ENCODE measurements at regions of chr16 and their contacts with region 1.

Region 1: GRCh38 chr16:67521095-67521804 is 7.4 kb upstream of the RIPOR1 start:
- DNase-seq: peak; percentile 95
- H3K4me3 Mint-ChIP-seq: peak overlapping the region; percentile 88
- H3K27ac Mint-ChIP-seq: peak overlapping the region; percentile 98
- H3K4me1 Mint-ChIP-seq: peaks cover 15% of the 10 kb centered on the region
- H3K27me3 Mint-ChIP-seq: peaks cover 8% of the 10 kb centered on the region

Region 2: DNA sequence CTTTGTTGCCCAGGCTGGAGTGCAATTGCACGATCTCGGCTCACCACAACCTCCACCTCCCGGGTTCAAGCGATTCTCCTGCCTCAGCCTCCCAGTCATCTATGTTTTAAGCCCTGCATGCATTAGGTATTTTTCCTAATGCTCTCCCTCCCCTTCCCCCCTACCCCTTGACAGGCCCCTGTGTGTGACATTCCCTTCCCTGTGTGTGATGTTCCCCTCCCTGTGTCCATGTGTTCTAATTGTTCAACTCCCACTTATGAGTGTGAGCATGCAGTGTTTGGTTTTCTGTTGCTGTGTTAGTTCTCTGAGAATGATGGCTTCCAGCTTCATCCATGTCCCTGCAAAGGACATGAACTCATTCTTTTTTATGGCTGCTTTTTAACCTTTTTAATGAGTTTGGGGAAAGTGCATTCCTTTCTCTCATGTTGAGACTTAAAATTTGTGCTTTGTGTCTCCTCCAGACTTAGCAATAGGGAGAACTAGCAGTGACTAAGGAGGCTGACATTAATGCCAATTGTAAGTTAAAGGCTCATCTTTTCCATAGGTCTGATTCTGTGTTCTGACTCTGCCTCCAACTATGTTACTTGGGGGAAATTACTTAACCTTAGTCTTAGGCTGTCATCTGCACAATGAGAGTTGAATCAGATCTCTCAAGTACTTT is 429.2 kb before region 1 on chr16:
- intact Hi-C with region 1: no loop called
- DNase-seq: no peak
- H3K4me3 Mint-ChIP-seq: no peak overlapping the region
- H3K27ac Mint-ChIP-seq: peak overlapping the region; percentile 92
- H3K4me1 Mint-ChIP-seq: peaks cover 17% of the 10 kb centered on the region
- H3K27me3 Mint-ChIP-seq: no peaks in the 10 kb centered on the region

Region 3: GRCh38 chr16:67499106-67499505 is 22.1 kb before region 1 on chr16:
- intact Hi-C with region 1: loop called (anchors 1 kb)
- DNase-seq: no peak
- H3K4me3 Mint-ChIP-seq: no peak overlapping the region
- H3K27ac Mint-ChIP-seq: no peak overlapping the region
- H3K4me1 Mint-ChIP-seq: peaks cover 19% of the 10 kb centered on the region
- H3K27me3 Mint-ChIP-seq: no peaks in the 10 kb centered on the region

Region 4: DNA sequence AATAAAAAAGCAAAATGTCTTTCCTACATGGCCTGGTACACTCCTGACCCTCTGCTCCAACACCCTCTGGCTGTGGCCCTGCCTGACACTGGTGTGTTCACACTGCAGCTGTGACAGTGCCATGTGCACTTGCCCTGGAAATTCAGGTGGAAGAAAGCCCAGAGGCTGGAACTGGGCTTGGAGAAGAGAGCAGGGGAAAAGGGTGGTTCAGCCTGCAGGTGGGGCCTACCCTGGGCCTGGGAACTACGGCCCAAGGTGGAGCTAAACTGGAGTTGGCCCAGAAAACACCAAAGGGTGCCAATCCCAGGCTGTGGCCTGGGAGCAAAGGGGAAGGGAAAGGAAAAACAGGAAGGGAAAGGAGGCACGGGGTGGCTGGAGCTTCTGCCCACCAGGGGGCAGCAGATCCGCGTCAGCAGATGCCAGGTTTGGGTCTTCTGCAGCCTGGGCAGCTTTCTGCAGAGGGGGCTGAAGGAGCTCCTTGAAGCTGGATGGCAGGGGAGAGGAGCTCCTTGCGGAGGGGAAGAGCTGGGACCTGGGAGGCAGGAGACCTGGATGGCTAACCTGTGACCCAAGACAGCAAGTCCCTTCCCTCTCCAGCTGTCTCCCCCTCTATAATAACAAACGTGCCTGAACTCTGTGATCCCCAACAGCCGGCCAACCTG is 25.6 kb after region 1 on chr16:
- intact Hi-C with region 1: loop called (anchors 1 kb)
- DNase-seq: peak; percentile 54
- H3K4me3 Mint-ChIP-seq: no peak overlapping the region
- H3K27ac Mint-ChIP-seq: peak overlapping the region; percentile 84
- H3K4me1 Mint-ChIP-seq: peaks cover 37% of the 10 kb centered on the region
- H3K27me3 Mint-ChIP-seq: no peaks in the 10 kb centered on the region

Region 5: DNA sequence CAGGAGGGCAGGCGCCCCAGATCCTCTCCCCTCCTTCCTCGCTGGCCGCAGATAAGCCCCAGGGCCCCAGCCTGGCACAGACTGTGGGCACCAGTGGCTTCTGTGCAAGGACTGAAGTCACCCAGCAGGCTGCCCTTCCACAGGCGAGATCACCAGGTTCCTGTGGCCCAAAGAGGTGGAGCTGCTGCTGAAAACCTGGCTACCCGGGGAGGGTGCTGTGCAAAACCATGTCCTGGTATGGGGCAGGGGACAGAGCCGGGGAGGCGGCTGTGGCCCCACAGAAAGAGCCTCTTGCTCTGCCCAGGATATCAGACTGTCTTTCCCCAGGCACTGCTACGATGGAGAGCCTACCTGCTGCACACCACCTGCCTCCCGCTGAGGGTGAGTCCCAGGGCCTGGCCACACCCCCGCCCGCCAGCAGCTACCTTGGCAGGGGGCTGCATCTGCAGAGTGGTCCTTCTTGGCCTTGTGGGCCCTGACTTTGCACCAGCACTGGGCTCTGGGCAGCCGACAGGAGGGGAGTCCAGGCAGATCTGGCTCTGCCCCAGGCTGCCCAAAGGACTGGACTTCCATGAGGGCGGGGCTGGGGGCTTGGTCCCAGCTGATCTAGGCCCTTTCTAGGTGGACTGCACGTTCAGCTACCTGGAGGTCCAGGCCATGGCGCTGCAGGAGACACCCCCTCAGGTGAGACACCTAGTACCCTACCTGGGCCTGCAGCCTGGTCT is 124.3 kb after region 1 on chr16:
- intact Hi-C with region 1: loop called (anchors 1 kb)
- DNase-seq: no peak
- H3K4me3 Mint-ChIP-seq: peak overlapping the region; percentile 89
- H3K27ac Mint-ChIP-seq: peak overlapping the region; percentile 94
- H3K4me1 Mint-ChIP-seq: no peaks in the 10 kb centered on the region
- H3K27me3 Mint-ChIP-seq: no peaks in the 10 kb centered on the region

Region 6: DNA sequence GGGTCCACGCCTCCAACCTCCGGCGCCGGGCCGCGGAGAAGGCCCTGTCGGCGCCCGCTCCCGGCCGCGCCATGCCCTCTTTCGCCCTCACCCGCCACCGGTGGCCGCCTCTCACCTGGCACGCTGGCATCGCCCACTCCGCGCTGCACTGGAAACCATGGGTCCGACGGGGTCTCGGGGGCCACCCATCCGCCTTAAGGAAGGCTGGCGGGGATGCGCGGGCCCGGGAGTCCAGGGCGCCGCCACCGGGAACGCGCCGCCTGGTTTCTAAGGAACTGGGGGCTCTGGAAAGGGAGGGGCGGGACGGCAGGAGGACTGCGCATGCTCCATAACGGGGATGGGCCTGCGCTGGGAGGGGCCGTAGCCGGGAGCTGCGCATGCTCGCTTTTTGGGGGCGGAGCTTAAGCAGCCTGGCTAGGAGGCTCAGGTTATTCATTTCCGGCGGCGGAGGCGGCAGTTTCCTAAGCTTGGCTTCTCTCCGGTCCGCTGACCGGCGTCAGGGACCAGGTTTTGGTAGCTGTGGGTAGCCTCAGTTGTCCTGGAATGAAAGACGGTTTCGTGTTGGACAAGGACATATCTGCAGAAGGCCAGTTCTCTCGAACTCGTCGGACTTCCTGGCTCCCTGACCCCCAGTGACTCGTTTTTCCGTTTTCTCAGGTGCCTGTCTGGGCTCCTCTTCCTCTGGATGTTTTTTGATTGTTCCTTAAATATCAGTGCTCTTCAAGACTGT is 198.0 kb after region 1 on chr16 and contains the start of gene GFOD2:
- intact Hi-C with region 1: loop called (anchors 2 kb)
- DNase-seq: peak; percentile 97
- H3K4me3 Mint-ChIP-seq: peak within 1 kb of the TSS; percentile 96
- H3K27ac Mint-ChIP-seq: peak within 1 kb of the TSS; percentile 94
- H3K4me1 Mint-ChIP-seq: peaks cover 33% of the 10 kb centered on the region
- H3K27me3 Mint-ChIP-seq: no peaks in the 10 kb centered on the region
- total RNA-seq, gene GFOD2: 19.6 and 20.3 TPM in 2 replicates

Region 7: GRCh38 chr16:67892899-67893742 is 371.9 kb after region 1 on chr16 and contains the start of gene PSKH1:
- intact Hi-C with region 1: loop called (anchors 1 kb)
- DNase-seq: peak; percentile 88
- H3K4me3 Mint-ChIP-seq: peak within 1 kb of the TSS; percentile 98
- H3K27ac Mint-ChIP-seq: peak within 1 kb of the TSS; percentile 96
- H3K4me1 Mint-ChIP-seq: peaks cover 20% of the 10 kb centered on the region
- H3K27me3 Mint-ChIP-seq: no peaks in the 10 kb centered on the region
- total RNA-seq, gene PSKH1: 17.8 TPM in 2 replicates

Measured in activated T-helper 1 cell treated with anti-CD3 and anti-CD28 coated beads, Interleukin-12 subunit alpha, Interleukin-12 subunit beta, Interleukin-2, Interleukin-4 antibody, amounts not matched to agents 30 ng/mL and 10 ng/mL and 1 ng/mL, durations not matched to agents 14 hours and 24 hours and 36 hours (primary cell).